CD4-positive, alpha-beta memory T cell (primary cell): ENCODE measurements at regions of chr5 and their contacts with region 1.

Region 1: GRCh38 chr5:126676195-126676624 is 75.5 kb downstream of the PHAX start:
- DNase-seq: peak; percentile 65 to 74 (median 72)
- H3K4me3 ChIP-seq: no peak overlapping the region
- H3K4me3 Mint-ChIP-seq: no peak overlapping the region
- H3K27ac ChIP-seq: no peak overlapping the region
- H3K27ac Mint-ChIP-seq: peak overlapping the region in 2 of 7 donors; percentile 2 to 31
- H3K4me1 ChIP-seq: no peaks in the 10 kb centered on the region
- H3K4me1 Mint-ChIP-seq: peaks cover 3 to 5% (median 4%) of the 10 kb centered on the region in 4 donors
- H3K27me3 ChIP-seq: no peaks in the 10 kb centered on the region
- H3K27me3 Mint-ChIP-seq: no peaks in the 10 kb centered on the region

Region 2: DNA sequence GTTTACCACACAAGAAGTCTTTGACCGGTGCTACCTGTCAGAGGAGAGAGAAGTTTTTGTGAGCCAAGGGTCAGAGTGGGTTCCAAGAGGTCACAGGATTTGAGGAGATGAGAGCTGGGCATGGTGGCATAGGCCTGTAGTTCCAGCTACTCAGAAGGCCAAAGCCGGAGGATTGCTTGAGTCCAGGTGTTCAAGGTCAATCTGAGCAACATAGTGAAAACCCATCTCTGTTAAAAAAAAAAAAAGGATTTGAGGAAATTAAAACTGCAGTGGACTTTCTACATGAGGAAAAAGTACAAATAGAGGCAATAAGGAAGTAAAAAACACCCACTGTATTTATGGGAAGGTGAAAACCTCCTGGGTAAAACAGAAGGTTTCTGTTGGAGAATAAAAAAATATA is 11.6 kb before region 1 on chr5:
- CTCF ChIA-PET with region 1: interaction called, 15 read pairs
- POLR2A ChIA-PET with region 1: no interaction called
- intact Hi-C with region 1: no loop called
- DNase-seq: no peak
- H3K4me3 ChIP-seq: no peak overlapping the region
- H3K4me3 Mint-ChIP-seq: no peak overlapping the region
- H3K27ac ChIP-seq: no peak overlapping the region
- H3K27ac Mint-ChIP-seq: peak overlapping the region in 1 of 7 donors; percentile 42
- H3K4me1 ChIP-seq: no peaks in the 10 kb centered on the region
- H3K4me1 Mint-ChIP-seq: no peaks in the 10 kb centered on the region
- H3K27me3 ChIP-seq: no peaks in the 10 kb centered on the region
- H3K27me3 Mint-ChIP-seq: peaks cover 2 to 5% of the 10 kb centered on the region in 2 donors

Region 3: DNA sequence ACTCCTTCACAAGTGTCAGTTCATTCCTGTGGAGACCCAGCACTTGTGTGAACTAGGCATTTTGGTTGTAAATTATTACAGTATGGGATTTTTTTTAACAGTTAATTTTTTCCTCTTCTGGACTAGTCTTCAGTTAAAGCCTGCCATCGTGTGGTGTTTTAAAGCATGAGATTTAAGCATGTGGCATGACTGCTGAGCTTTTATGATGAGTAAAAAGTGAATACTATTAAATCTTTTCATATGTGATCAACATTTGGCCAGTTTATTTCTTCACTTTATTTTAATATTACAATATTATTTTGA is 125.7 kb after region 1 on chr5:
- CTCF ChIA-PET with region 1: interaction called, 51 read pairs
- POLR2A ChIA-PET with region 1: no interaction called
- intact Hi-C with region 1: no loop called
- DNase-seq: peak in 3 of 5 donors; percentile 19 to 22 (median 19)
- H3K4me3 ChIP-seq: no peak overlapping the region
- H3K4me3 Mint-ChIP-seq: no peak overlapping the region
- H3K27ac ChIP-seq: no peak overlapping the region
- H3K27ac Mint-ChIP-seq: peak overlapping the region in 3 of 7 donors; percentile 10 to 36 (median 19)
- H3K4me1 ChIP-seq: no peaks in the 10 kb centered on the region
- H3K4me1 Mint-ChIP-seq: peaks cover 24 to 49% (median 30%) of the 10 kb centered on the region in 4 donors
- H3K27me3 ChIP-seq: no peaks in the 10 kb centered on the region
- H3K27me3 Mint-ChIP-seq: no peaks in the 10 kb centered on the region

Region 4: GRCh38 chr5:127030259-127031146 is 354.3 kb after region 1 on chr5 and contains the start of gene MARCHF3:
- CTCF ChIA-PET with region 1: no interaction called
- POLR2A ChIA-PET with region 1: no interaction called
- intact Hi-C with region 1: loop called (anchors 5 kb)
- DNase-seq: peak; percentile 92 to 95 (median 94)
- H3K4me3 ChIP-seq: peak within 1 kb of the TSS; percentile 51 to 85
- H3K4me3 Mint-ChIP-seq: peak within 1 kb of the TSS; percentile 89 to 94 (median 90)
- H3K27ac ChIP-seq: peak within 1 kb of the TSS; percentile 56
- H3K27ac Mint-ChIP-seq: peak within 1 kb of the TSS; percentile 35 to 91 (median 77)
- H3K4me1 ChIP-seq: peaks cover 16% of the 10 kb centered on the region
- H3K4me1 Mint-ChIP-seq: peaks cover 5 to 17% (median 7%) of the 10 kb centered on the region in 4 donors
- H3K27me3 ChIP-seq: no peaks in the 10 kb centered on the region
- H3K27me3 Mint-ChIP-seq: peaks cover 0 to 17% of the 10 kb centered on the region in 2 donors
- total RNA-seq, gene MARCHF3: 3.2 to 3.3 TPM

Region 5: GRCh38 chr5:127313847-127314473 is 637.8 kb after region 1 on chr5:
- CTCF ChIA-PET with region 1: interaction called, 14 read pairs
- POLR2A ChIA-PET with region 1: no interaction called
- intact Hi-C with region 1: loop called (anchors 1 kb)
- DNase-seq: peak in 4 of 5 donors; percentile 38 to 55 (median 54)
- H3K4me3 ChIP-seq: no peak overlapping the region
- H3K4me3 Mint-ChIP-seq: peak overlapping the region in 1 of 8 donors; percentile 50
- H3K27ac ChIP-seq: no peak overlapping the region
- H3K27ac Mint-ChIP-seq: peak overlapping the region in 1 of 7 donors; percentile 81
- H3K4me1 ChIP-seq: no peaks in the 10 kb centered on the region
- H3K4me1 Mint-ChIP-seq: peaks cover 0 to 4% (median under 1%) of the 10 kb centered on the region in 4 donors
- H3K27me3 ChIP-seq: no peaks in the 10 kb centered on the region
- H3K27me3 Mint-ChIP-seq: peaks cover 5 to 9% of the 10 kb centered on the region in 2 donors